ENCODE measurements at regions of chr22 and their contacts with region 1.

Region 1: DNA sequence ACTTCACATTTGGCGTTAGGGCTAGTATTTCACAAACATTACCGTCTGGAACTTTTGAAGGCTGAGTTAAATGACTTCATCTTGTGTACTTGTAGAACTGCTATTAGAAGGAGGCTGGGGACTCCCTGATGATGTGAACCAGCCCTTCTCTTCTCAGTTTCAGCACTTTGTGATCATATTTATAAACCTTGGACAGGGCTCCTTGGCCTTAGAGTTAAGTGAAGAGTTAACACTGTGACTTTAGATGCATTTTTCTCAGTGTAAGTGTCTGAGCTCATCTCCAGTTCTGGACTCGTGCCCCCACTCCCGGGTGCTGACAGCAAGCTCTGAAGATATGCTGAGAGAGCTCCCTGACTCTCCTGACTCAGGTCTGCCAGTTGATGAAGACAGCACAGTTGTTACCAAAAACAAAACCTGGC is 8.4 kb downstream of the MIAT start:
- DNase-seq: no peak
- H3K4me3 ChIP-seq: no peak overlapping the region
- H3K27ac ChIP-seq: no peak overlapping the region
- H3K4me1 ChIP-seq: no peaks in the 10 kb centered on the region
- H3K27me3 ChIP-seq: peaks cover 6 to 12% of the 10 kb centered on the region in 2 experiments
- CTCF ChIP-seq: no peak
- POLR2A ChIP-seq: no peak

Region 2: GRCh38 chr22:26398741-26399153 is 267.1 kb before region 1 on chr22:
- CTCF ChIA-PET with region 1: interaction called, 11 read pairs
- POLR2A ChIA-PET with region 1: no interaction called
- dilution Hi-C with region 1: no loop called
- intact Hi-C with region 1: loop called (anchors 1 kb)
- DNase-seq: peak; percentile 72
- H3K4me3 ChIP-seq: no peak overlapping the region
- H3K27ac ChIP-seq: no peak overlapping the region
- H3K4me1 ChIP-seq: no peaks in the 10 kb centered on the region
- H3K27me3 ChIP-seq: peaks cover 4 to 8% of the 10 kb centered on the region in 2 experiments
- CTCF ChIP-seq: peak; percentile 68 to 72
- POLR2A ChIP-seq: no peak

Region 3: DNA sequence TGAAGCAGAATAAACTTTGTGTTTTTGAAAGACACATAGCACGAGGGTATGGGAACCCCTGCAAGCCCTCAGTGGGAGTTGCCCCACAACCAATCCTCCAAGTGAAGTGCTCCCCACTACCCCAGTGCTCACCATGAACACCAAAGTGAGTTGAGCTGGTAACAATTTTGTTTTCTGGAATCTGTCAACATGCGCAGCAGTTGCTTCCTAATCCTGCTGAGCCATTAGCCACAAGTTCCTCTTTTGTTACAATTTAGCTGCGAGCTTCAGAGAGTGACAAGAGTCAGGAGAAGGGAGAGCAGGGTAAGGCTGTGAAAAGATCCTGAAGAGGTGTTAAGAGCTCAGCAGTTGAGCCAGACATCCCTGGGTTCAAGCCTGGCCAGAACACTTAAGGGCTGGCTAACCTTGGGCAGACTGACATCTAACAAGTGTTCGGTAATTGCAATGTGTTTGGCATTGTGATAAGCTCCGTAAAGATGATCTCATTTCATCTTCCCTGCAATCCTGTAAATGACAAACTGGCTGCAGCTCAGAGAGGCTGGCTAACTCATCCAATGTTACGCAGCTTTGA is 260.9 kb before region 1 on chr22:
- CTCF ChIA-PET with region 1: interaction called, 11 read pairs
- POLR2A ChIA-PET with region 1: no interaction called
- dilution Hi-C with region 1: no loop called
- intact Hi-C with region 1: no loop called
- DNase-seq: no peak
- H3K4me3 ChIP-seq: no peak overlapping the region
- H3K27ac ChIP-seq: no peak overlapping the region
- H3K4me1 ChIP-seq: no peaks in the 10 kb centered on the region
- H3K27me3 ChIP-seq: peaks cover 14 to 17% of the 10 kb centered on the region in 2 experiments
- CTCF ChIP-seq: no peak
- POLR2A ChIP-seq: no peak

Region 4: GRCh38 chr22:26502688-26503561 is 162.9 kb before region 1 on chr22:
- CTCF ChIA-PET with region 1: interaction called, 17 read pairs
- POLR2A ChIA-PET with region 1: no interaction called
- dilution Hi-C with region 1: no loop called
- intact Hi-C with region 1: loop called (anchors 1 kb)
- DNase-seq: peak; percentile 64
- H3K4me3 ChIP-seq: no peak overlapping the region
- H3K27ac ChIP-seq: peak overlapping the region; percentile 39
- H3K4me1 ChIP-seq: peaks cover 27% of the 10 kb centered on the region
- H3K27me3 ChIP-seq: no peaks in the 10 kb centered on the region
- CTCF ChIP-seq: peak; percentile 63 to 76
- POLR2A ChIP-seq: no peak

Region 5: GRCh38 chr22:26711205-26711963 is 45.6 kb after region 1 on chr22:
- CTCF ChIA-PET with region 1: no interaction called
- POLR2A ChIA-PET with region 1: no interaction called
- dilution Hi-C with region 1: no loop called
- intact Hi-C with region 1: no loop called
- DNase-seq: peak; percentile 89
- H3K4me3 ChIP-seq: no peak overlapping the region
- H3K27ac ChIP-seq: peak overlapping the region; percentile 72
- H3K4me1 ChIP-seq: peaks cover 34% of the 10 kb centered on the region
- H3K27me3 ChIP-seq: no peaks in the 10 kb centered on the region
- CTCF ChIP-seq: no peak
- POLR2A ChIP-seq: no peak

Region 6: GRCh38 chr22:26800858-26801257 is 135.0 kb after region 1 on chr22:
- CTCF ChIA-PET with region 1: no interaction called
- POLR2A ChIA-PET with region 1: no interaction called
- dilution Hi-C with region 1: no loop called
- intact Hi-C with region 1: no loop called
- DNase-seq: no peak
- H3K4me3 ChIP-seq: no peak overlapping the region
- H3K27ac ChIP-seq: no peak overlapping the region
- H3K4me1 ChIP-seq: no peaks in the 10 kb centered on the region
- H3K27me3 ChIP-seq: no peaks in the 10 kb centered on the region
- CTCF ChIP-seq: no peak
- POLR2A ChIP-seq: no peak

Measured in endothelial cell of umbilical vein (primary cell).